Panc1 (cell line): ENCODE measurements at regions of chr1 and their contacts with region 1.

Region 1: GRCh38 chr1:224312025-224312424 is 17.9 kb downstream of the NVL start:
- DNase-seq: no peak
- ATAC-seq: no peak
- H3K4me3 ChIP-seq: no peak overlapping the region
- H3K27ac ChIP-seq: no peak overlapping the region
- H3K4me1 ChIP-seq: no peaks in the 10 kb centered on the region
- H3K27me3 ChIP-seq: no peaks in the 10 kb centered on the region
- CTCF ChIP-seq: no peak

Region 2: DNA sequence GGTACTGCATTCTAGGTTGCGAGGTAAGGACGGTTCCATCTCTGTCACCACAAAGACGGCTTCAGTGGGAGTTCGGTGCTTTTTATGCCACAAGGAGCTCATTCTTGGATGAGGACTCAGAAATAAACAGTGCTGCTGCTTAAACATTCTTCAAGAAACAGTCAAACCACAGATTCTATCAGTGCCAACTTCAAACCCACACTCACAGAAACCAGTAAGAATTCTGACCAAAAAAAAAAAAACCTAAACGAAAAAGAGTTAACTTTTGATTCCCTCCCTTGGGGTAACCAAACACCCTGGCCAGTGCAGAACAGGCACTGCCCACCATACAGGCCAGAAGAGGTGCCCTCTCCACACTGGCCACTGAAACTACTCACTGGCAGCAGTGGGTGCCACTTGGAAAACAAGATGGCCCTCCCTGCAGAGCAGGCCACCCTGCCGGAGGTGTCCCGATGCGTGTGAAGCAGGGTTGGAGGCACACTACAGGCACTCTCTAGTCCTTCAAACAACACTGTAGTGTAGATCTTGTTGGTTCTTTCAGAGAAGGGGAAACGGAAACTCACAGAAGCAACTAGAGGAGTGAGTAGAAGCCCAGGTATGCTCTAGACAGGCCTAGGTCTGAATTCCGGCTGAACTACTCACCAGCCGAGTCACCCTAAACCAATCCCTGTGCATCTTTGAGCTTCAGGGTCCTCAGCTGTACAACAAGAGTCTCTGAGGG is 1081.7 kb before region 1 on chr1:
- CTCF ChIA-PET with region 1: no interaction called
- POLR2A ChIA-PET with region 1: no interaction called
- in situ Hi-C with region 1: no loop called
- intact Hi-C with region 1: no loop called
- DNase-seq: no peak
- ATAC-seq: 0 out of 2 replicates have a peak, but pooled peaks have one; percentile 37
- H3K4me3 ChIP-seq: no peak overlapping the region
- H3K27ac ChIP-seq: no peak overlapping the region
- H3K4me1 ChIP-seq: peaks cover 6% of the 10 kb centered on the region; the same call in 1 of the 2 replicates
- H3K27me3 ChIP-seq: no peaks in the 10 kb centered on the region
- CTCF ChIP-seq: no peak

Region 3: GRCh38 chr1:224267922-224268321 is 44.1 kb before region 1 on chr1:
- CTCF ChIA-PET with region 1: no interaction called
- POLR2A ChIA-PET with region 1: interaction called, 12 read pairs
- in situ Hi-C with region 1: no loop called
- intact Hi-C with region 1: no loop called
- DNase-seq: no peak
- ATAC-seq: no peak
- H3K4me3 ChIP-seq: no peak overlapping the region
- H3K27ac ChIP-seq: no peak overlapping the region
- H3K4me1 ChIP-seq: 0 out of 2 replicates have a peak, but pooled peaks cover 5% of the 10 kb centered on the region
- H3K27me3 ChIP-seq: no peaks in the 10 kb centered on the region
- CTCF ChIP-seq: no peak

Region 4: GRCh38 chr1:224411766-224412165 is 99.7 kb after region 1 on chr1:
- CTCF ChIA-PET with region 1: no interaction called
- POLR2A ChIA-PET with region 1: no interaction called
- in situ Hi-C with region 1: no loop called
- intact Hi-C with region 1: no loop called
- DNase-seq: no peak
- ATAC-seq: peak; percentile 70
- H3K4me3 ChIP-seq: no peak overlapping the region
- H3K27ac ChIP-seq: no peak overlapping the region
- H3K4me1 ChIP-seq: 0 out of 2 replicates have a peak, but pooled peaks cover 2% of the 10 kb centered on the region
- H3K27me3 ChIP-seq: no peaks in the 10 kb centered on the region
- CTCF ChIP-seq: no peak

Region 5: DNA sequence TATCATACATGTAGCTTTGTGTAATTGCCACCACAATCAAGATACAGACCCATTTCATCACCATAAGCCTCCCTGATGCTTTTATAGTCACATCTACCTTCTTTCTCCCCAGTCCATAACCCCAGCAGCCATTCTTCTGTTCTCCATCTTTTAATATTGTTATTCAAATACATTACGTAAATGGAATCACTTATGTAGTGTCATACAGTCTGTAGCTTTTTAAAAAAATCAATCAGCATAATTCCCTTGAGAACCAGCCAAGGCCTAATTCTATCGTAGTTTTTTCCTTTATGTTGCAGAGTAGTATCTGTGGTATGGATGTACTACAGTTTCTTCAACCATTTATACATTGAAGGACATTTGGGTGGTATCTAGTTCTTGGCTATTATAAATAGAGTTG is 154.1 kb after region 1 on chr1:
- CTCF ChIA-PET with region 1: no interaction called
- POLR2A ChIA-PET with region 1: no interaction called
- in situ Hi-C with region 1: no loop called
- intact Hi-C with region 1: no loop called
- DNase-seq: no peak
- ATAC-seq: no peak
- H3K4me3 ChIP-seq: no peak overlapping the region
- H3K27ac ChIP-seq: no peak overlapping the region
- H3K4me1 ChIP-seq: no peaks in the 10 kb centered on the region
- H3K27me3 ChIP-seq: no peaks in the 10 kb centered on the region
- CTCF ChIP-seq: no peak